ENCODE measurements at regions of chr4 and their contacts with region 1.

Region 1: DNA sequence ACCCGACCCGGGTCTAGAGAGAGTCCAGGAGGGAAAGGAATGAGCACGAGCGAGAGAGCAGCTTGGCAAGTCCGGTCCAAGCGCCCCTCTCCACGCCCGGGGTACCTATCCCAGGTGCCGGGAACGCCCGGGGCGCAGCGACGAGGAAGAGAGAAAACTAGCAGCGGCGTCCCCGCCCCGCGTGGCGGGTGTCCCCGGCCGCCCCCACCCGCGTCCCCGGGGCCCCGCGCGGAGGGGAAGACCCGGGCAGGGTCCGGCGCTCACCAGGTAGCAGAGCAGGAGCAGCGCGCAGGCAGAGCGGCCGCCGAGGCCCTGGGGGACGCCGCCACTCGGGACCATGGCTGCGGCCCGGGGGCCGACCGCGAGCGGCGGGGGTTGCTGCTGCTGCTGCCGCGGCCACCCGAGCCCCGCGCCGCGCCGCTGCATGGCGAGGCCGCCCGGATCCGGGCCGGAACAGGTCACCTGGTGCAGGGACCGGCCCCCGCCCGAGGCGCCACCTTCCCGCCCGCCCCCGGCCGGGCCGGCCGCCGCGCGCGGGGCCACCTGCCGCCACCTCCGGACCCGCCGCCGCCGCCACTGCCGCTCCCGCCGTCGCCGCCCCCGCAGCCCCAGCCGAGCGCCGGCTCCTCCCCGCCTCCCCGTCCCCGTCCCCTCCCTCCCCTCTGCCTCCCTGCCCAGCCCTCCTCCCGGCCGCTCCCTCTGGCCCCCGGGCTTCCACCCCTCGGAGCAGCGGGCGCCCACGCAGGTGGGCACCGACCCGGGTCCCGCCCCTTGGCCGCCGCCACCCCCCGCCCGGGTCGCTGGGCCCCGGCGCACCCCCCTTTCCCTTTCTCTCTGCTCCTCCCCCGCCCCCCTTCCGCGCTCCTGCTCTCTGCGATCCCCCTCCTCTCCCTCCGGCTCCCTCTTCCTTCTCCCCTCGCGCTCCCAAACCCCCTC is at the start of gene SEL1L3:
- DNase-seq: peak; percentile 27
- ATAC-seq: peak; percentile 56
- H3K4me3 ChIP-seq: peak within 1 kb of the TSS; percentile 87
- H3K27ac ChIP-seq: peak within 1 kb of the TSS; percentile 35
- H3K4me1 ChIP-seq: peaks cover 21% of the 10 kb centered on the region
- H3K27me3 ChIP-seq: no peaks in the 10 kb centered on the region
- CTCF ChIP-seq: no peak
- total RNA-seq, gene SEL1L3: 31.9 and 36.1 TPM in 2 replicates

Region 2: DNA sequence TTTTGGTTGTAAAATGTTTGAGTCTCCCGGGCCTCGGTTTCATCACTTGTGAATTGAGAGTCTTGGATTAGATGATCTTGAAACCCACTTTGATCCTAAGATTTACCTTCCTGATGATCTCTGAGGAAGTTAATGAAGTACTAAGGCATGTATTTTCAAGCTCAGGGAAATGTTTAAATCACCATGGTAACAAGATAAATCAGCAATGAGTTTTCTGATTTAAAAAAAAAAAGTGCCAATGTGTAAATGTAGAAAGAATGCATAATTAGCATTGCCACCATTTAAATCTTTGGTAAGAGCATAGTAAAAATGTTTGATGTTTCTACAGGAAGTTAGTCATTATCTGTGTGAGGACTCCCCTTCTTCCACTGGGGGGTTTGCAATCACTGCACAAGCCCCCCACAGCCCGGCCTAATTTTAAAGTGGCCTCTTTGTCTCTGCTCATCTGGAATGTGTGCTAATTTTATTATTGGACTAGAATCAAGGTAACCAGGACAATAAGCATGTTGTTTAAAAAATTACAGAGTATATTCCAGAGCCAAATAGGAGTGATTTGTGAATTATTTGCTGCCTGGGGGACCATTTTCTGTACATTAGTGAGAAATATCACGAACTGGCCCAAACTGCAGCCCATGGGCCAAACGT is 113.4 kb before region 1 on chr4:
- CTCF ChIA-PET with region 1: no interaction called
- POLR2A ChIA-PET with region 1: no interaction called
- intact Hi-C with region 1: no loop called
- DNase-seq: no peak
- ATAC-seq: no peak
- H3K4me3 ChIP-seq: no peak overlapping the region
- H3K27ac ChIP-seq: no peak overlapping the region
- H3K4me1 ChIP-seq: no peaks in the 10 kb centered on the region
- H3K27me3 ChIP-seq: no peaks in the 10 kb centered on the region
- CTCF ChIP-seq: no peak

Region 3: GRCh38 chr4:25817059-25817681 is 45.5 kb before region 1 on chr4:
- CTCF ChIA-PET with region 1: no interaction called
- POLR2A ChIA-PET with region 1: no interaction called
- intact Hi-C with region 1: loop called (anchors 2 kb)
- DNase-seq: peak; percentile 85
- ATAC-seq: peak; percentile 77
- H3K4me3 ChIP-seq: no peak overlapping the region
- H3K27ac ChIP-seq: peak overlapping the region; percentile 60
- H3K4me1 ChIP-seq: peaks cover 54% of the 10 kb centered on the region
- H3K27me3 ChIP-seq: no peaks in the 10 kb centered on the region
- CTCF ChIP-seq: no peak

Region 4: GRCh38 chr4:25913851-25914669 is 51.4 kb after region 1 on chr4 and contains the start of gene SMIM20:
- CTCF ChIA-PET with region 1: no interaction called
- POLR2A ChIA-PET with region 1: no interaction called
- intact Hi-C with region 1: loop called (anchors 5 kb)
- DNase-seq: peak; percentile 80
- ATAC-seq: peak; percentile 96
- H3K4me3 ChIP-seq: peak within 1 kb of the TSS; percentile 96
- H3K27ac ChIP-seq: peak within 1 kb of the TSS; percentile 68
- H3K4me1 ChIP-seq: peaks cover 8% of the 10 kb centered on the region
- H3K27me3 ChIP-seq: no peaks in the 10 kb centered on the region
- CTCF ChIP-seq: no peak
- total RNA-seq, gene SMIM20: 21.3 and 27.0 TPM in 2 replicates

Measured in PC-3 (cell line).